Caco-2 (cell line): ENCODE measurements at regions of chr2 and their contacts with region 1.

Region 1: DNA sequence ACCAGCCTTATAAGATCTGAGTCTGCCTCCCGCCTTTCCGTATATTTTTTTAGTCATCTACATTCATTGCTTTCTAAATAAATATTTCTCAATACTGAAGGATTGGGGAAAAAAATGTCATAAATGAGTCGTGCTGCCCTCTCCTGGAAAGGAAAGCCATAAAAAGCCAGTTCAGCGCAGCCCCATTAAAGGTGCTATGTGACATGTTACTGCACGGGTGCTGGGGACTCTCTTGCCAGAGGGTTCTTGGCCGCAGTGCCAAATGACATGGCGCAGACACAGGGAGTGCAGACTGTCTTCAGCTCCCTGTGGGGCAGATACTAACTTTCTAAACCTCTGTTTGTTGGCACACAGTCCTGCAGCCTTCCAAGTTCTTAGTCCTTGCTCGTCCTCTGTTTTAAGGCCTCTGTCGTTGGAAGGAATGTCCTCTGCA is 53.7 kb upstream of the MAP3K20 start:
- DNase-seq: peak in 1 of 2 experiments; percentile 49
- H3K4me3 ChIP-seq: no peak overlapping the region
- H3K4me3 Mint-ChIP-seq: no peak overlapping the region
- H3K27ac Mint-ChIP-seq: no peak overlapping the region
- H3K4me1 ChIP-seq: no peaks in the 10 kb centered on the region; the same call in 1 of the 2 replicates
- H3K4me1 Mint-ChIP-seq: no peaks in the 10 kb centered on the region
- H3K27me3 ChIP-seq: no peaks in the 10 kb centered on the region
- H3K27me3 Mint-ChIP-seq: no peaks in the 10 kb centered on the region
- CTCF ChIP-seq: peak; percentile 24 to 47

Region 2: DNA sequence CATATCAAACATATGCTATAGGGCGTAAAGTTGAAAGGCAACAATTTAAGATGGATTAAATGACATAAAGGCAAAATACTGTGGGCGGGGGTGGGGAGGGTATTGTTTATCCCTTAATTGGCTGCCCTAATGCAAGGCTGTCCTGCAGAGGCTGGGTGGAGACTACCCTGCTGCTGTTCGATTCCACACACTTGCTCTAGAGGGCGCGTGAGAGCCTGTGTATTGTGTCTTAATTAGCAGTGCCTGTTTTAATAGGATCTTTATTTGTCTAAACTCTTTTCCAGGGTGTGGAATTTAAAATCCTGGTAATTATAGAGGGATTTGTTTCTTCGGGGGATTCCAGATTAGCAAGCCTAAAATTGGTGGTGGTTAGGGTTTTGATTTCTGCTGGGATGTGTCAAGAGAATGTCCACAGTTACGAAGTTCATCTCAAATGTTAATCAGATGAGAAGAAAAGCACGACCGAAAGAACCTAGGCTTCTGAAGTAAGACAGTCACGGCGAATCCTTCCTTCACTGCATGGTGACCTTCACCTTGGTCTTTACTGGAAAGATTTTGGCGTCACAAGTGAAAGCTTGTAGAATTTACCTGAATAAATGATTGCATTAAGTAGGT is 49.8 kb before region 1 on chr2:
- CTCF ChIA-PET with region 1: no interaction called
- POLR2A ChIA-PET with region 1: no interaction called
- intact Hi-C with region 1: loop called (anchors 1 kb)
- DNase-seq: peak; percentile 46 to 63
- H3K4me3 ChIP-seq: no peak overlapping the region
- H3K4me3 Mint-ChIP-seq: no peak overlapping the region
- H3K27ac Mint-ChIP-seq: no peak overlapping the region
- H3K4me1 ChIP-seq: 0 out of 2 replicates have a peak, but pooled peaks cover 3% of the 10 kb centered on the region
- H3K4me1 Mint-ChIP-seq: peaks cover 7% of the 10 kb centered on the region
- H3K27me3 ChIP-seq: no peaks in the 10 kb centered on the region
- H3K27me3 Mint-ChIP-seq: no peaks in the 10 kb centered on the region
- CTCF ChIP-seq: peak; percentile 88 to 89

Region 3: DNA sequence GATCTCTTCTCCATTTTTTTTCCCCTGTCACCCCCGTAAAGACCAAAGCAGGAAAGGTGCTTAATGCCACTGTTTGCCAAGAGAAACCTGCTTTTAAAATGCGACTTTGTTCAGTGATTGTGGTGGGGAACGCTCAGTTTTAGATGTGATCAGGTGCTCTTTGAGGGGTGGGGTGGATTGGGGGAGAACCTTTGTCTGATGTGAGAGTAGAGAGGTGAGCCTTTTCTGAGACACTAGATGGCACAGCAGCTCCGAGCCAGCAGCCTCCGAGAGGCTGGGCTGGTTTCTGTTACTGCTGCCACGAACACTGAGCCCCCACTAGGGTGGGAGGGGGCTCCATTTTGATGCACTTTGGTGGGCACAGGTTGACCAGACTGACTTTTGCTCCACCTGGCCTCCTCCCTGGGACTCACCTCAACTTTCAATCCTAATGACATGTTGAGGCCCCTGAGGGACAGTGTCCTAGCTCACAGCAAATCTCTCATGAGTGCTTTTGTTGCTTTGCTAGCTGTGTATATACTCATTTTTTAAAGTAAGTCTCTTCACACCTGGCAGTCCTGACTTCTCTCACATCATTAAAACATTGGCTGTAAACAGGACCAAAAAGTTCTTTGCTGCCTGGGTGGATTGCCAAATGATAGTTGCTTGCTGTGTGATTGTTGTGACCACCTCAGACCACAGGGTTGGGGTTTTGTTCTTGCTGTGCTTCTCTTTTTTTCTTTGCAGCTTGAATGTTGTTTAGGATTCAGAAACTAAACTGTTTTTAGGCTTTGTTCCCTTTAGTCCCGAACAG is 44.5 kb before region 1 on chr2:
- CTCF ChIA-PET with region 1: no interaction called
- POLR2A ChIA-PET with region 1: no interaction called
- intact Hi-C with region 1: loop called (anchors 1 kb)
- DNase-seq: no peak
- H3K4me3 ChIP-seq: no peak overlapping the region
- H3K4me3 Mint-ChIP-seq: no peak overlapping the region
- H3K27ac Mint-ChIP-seq: no peak overlapping the region
- H3K4me1 ChIP-seq: 0 out of 2 replicates have a peak, but pooled peaks cover 3% of the 10 kb centered on the region
- H3K4me1 Mint-ChIP-seq: peaks cover 7% of the 10 kb centered on the region
- H3K27me3 ChIP-seq: no peaks in the 10 kb centered on the region
- H3K27me3 Mint-ChIP-seq: no peaks in the 10 kb centered on the region
- CTCF ChIP-seq: peak in 1 of 2 experiments; percentile 40

Region 4: GRCh38 chr2:172995323-172996244 is 26.4 kb before region 1 on chr2:
- CTCF ChIA-PET with region 1: no interaction called
- POLR2A ChIA-PET with region 1: no interaction called
- intact Hi-C with region 1: no loop called
- DNase-seq: peak; percentile 79 to 87
- H3K4me3 ChIP-seq: no peak overlapping the region
- H3K4me3 Mint-ChIP-seq: peak overlapping the region; percentile 15
- H3K27ac Mint-ChIP-seq: peak overlapping the region; percentile 69
- H3K4me1 ChIP-seq: peaks cover 16% of the 10 kb centered on the region
- H3K4me1 Mint-ChIP-seq: peaks cover 39% of the 10 kb centered on the region
- H3K27me3 ChIP-seq: no peaks in the 10 kb centered on the region
- H3K27me3 Mint-ChIP-seq: peaks cover under 1% of the 10 kb centered on the region
- CTCF ChIP-seq: peak; percentile 37